Right ventricle myocardium superior (tissue), 1 donor: ENCODE measurements at regions of chr3 and their contacts with region 1.

Region 1: GRCh38 chr3:133821767-133822638 is 16.4 kb downstream of the SRPRB start:
- DNase-seq: peak; percentile 84
- ATAC-seq: peak; percentile 76

Region 2: DNA sequence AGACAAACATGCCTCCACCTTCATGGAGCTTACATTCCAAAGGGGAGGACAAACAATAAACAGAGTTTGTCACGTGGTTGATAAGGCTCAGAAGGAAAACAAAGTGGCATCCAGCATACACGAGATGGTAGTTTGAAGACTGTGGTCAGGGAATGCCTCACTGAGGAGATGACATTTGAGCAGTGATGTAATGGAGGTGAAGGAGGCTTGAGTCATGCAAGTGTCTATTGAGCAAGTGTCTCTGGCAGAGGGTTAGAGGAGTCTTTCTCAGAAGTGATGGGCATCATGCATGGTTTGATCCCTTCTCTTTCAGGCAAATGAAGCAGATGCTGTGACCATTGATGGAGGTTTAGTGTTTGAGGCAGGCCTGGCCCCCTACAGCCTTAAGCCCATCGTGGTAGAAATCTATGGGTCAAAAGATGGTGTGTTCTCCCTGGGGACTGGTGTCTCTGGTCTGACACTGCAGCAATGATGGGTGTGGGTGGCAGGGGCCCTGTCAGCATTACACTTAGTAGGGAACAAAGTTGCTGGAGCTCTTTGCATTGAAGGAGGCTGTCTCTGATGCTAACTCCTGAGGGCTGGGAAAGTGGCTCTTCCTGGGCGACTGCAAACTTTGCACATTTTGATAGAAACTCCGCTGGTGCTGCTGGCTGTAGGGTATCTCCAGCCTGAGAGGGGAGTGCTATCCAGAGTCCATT is 130.4 kb before region 1 on chr3:
- intact Hi-C with region 1: no loop called
- DNase-seq: no peak
- ATAC-seq: no peak

Region 3: GRCh38 chr3:133894353-133895207 is 72.6 kb after region 1 on chr3:
- intact Hi-C with region 1: loop called (anchors 5 kb)
- DNase-seq: no peak
- ATAC-seq: peak; percentile 36

Region 4: GRCh38 chr3:133905376-133905775 is 83.4 kb after region 1 on chr3:
- intact Hi-C with region 1: no loop called
- DNase-seq: no peak
- ATAC-seq: no peak

Region 5: GRCh38 chr3:133927540-133928066 is 105.6 kb after region 1 on chr3:
- intact Hi-C with region 1: loop called (anchors 5 kb)
- DNase-seq: peak; percentile 79
- ATAC-seq: peak; percentile 93

Region 6: GRCh38 chr3:134326760-134327593 is 505.0 kb after region 1 on chr3:
- intact Hi-C with region 1: no loop called
- DNase-seq: peak; percentile 49
- ATAC-seq: peak; percentile 73